AG04450 (cell line): ENCODE measurements at regions of chr9 and their contacts with region 1.

Region 1: DNA sequence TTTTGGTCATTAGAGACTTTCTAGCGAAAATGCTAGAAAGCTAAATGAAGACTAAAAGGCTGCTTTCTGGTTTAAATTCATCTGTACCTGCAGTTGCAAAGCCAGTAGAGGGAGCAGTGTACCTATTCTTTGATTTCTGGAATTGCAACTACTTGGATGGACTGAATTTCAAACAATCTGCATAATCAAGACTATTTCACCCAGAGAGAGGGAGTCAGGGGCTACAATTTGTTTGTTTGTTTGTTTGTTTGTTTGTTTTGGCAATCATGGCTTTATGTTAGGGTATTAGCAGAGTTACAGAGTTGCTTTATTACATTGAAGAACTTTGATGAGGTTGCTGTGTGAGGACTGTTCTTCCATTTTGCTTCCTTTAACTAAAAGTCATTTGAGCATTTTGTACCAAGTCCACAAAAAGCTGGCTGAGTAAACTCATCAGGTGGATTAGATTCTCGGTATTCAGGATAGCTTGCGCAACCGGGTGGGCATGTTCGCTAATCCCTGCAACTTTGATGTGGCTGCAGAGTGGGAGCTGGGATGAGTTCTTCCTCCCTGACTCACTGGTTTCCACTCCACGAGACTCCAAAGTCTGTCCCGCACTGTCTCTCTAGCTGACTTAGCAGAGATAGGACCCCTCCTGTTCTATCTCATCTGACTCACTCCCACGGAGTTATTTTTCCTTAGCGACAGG is 80.0 kb upstream of the TUT7 start:
- DNase-seq: peak; percentile 49
- H3K4me3 ChIP-seq: peak overlapping the region; percentile 5; the same call in 1 of the 2 replicates
- H3K27ac ChIP-seq: no peak overlapping the region
- H3K27me3 ChIP-seq: no peaks in the 10 kb centered on the region
- CTCF ChIP-seq: peak; percentile 89

Region 2: DNA sequence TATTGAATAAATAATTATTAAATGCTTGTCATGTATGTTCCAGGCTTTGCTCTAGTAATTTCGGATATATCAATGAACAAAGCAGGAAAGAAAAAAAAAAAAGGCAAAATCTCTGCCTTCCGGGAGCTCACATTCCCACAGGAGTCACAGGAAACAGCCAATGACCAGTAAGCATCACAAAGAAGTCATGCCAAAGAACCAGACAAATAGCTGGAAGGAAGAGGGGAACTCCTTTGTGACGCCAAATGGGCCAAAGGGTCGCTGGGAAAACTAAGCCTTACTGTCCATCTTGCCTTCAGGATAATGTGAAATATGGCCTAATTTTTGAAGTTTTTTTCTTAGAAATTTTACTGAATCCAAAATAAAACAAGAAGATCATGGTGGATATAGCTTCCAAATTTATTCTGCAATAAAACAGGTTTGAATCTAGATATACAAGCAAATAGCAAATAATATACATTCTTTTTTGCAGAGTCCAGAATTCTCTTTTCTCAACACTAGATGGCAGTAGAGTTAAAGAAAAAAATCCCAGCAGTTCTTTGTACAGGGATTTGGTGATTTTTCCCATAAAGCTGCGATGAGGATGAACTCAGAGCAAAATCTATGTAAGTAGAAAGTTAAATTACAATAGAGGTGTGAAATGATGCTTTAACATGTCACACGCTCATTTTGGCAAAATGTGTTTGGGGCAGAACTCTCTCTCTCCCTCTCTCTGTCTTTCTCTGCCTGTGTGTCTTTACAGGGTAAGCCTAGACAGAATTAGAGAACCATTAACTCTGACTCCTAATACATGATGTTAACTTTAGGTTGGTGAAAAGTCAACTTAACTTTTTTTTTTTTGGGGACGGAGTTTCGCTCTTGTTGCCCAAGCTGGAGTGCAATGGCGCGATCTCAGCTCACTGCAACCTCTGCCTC is 20.0 kb before region 1 on chr9:
- CTCF ChIA-PET with region 1: interaction called, 65 read pairs
- POLR2A ChIA-PET with region 1: no interaction called
- DNase-seq: no peak
- H3K4me3 ChIP-seq: no peak overlapping the region
- H3K27ac ChIP-seq: no peak overlapping the region
- H3K27me3 ChIP-seq: no peaks in the 10 kb centered on the region
- CTCF ChIP-seq: peak; percentile 59

Region 3: DNA sequence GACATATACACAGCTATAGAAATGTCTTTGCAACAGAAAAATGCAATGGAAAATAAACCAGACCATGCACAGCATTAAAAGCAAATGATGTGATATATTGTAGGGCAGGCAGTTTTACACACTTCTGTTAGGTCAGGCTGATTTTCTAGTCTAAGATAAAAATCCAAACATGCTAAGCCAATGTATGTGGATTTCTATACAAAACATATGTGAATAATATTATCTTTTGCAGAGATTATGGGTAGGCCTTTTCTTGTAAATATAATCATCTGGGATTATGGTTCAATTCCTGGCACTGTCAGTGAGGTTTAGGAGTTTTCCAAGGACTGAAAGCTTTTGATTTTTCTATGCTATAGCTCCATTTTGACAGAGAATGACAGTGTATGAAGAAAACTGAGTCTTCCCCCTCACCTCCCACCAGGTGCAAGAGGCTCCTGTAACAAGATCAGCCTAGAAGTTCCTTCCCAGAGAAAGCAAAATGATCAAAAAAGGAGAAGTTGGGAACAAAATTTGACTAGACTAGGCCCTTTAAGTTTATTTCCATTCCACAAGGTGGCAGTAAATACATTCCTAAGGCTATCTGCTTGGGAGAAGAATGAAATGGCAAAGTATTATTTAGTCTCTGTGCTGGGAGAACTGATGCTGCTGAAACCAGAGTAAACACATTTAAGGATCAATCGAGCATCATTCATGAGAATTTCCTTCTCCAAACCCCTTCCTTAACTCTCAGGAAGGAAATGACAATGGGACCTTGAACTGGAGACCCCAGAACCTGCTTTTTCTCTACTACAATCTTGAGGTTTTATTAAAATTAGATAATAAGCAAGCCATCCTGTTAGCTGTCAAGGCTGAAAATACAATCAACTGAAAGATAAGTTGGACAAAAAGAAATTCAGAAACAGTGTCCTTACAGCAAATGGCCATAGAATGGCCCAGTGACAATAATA is 53.0 kb after region 1 on chr9:
- CTCF ChIA-PET with region 1: interaction called, 24 read pairs
- POLR2A ChIA-PET with region 1: no interaction called
- DNase-seq: no peak
- H3K4me3 ChIP-seq: no peak overlapping the region
- H3K27ac ChIP-seq: no peak overlapping the region
- H3K27me3 ChIP-seq: no peaks in the 10 kb centered on the region
- CTCF ChIP-seq: peak; percentile 75

Region 4: GRCh38 chr9:87259543-87260518 is 825.6 kb after region 1 on chr9:
- CTCF ChIA-PET with region 1: interaction called, 12 read pairs
- POLR2A ChIA-PET with region 1: no interaction called
- DNase-seq: no peak
- H3K4me3 ChIP-seq: no peak overlapping the region
- H3K27ac ChIP-seq: no peak overlapping the region
- H3K27me3 ChIP-seq: no peaks in the 10 kb centered on the region
- CTCF ChIP-seq: no peak

Region 5: DNA sequence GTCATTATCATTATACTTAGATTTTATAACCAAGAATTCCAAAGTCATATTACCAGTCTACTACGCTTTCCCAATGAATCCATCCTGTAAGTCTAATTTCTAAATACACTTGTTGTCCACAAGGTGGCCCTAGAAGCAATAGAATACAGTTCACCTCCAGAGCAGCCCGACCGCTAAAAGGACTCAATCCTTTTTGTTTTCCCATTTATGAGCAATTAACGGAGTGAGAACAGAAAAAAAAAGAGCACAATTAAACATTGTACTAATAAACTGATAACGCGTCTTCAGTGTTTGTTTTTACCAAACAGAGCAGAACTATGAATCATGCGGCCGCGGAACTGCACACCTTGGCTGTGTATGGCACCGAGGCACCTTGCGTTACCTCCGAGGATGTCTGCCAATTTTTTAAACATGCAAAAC is 902.7 kb after region 1 on chr9:
- CTCF ChIA-PET with region 1: interaction called, 11 read pairs
- POLR2A ChIA-PET with region 1: no interaction called
- DNase-seq: peak; percentile 38
- H3K4me3 ChIP-seq: no peak overlapping the region; the same call in none of the 2 replicates
- H3K27ac ChIP-seq: no peak overlapping the region
- H3K27me3 ChIP-seq: peaks cover 8% of the 10 kb centered on the region
- CTCF ChIP-seq: peak; percentile 67